ENCODE measurements at regions of chr1 and their contacts with region 1.

Region 1: GRCh38 chr1:204162231-204163074 is 3.7 kb downstream of the REN start:
- DNase-seq: peak; percentile 70 to 89 (median 74)
- ATAC-seq: peak; percentile 67 to 90 (median 86)
- H3K4me3 ChIP-seq: no peak overlapping the region
- H3K27ac ChIP-seq: no peak overlapping the region
- H3K4me1 ChIP-seq: no peaks in the 10 kb centered on the region
- H3K27me3 ChIP-seq: peaks cover 0 to 8% (median 0%) of the 10 kb centered on the region in 9 donors
- CTCF ChIP-seq: peak; percentile 92 to 100 (median 99)
- POLR2A ChIP-seq: no peak

Region 2: GRCh38 chr1:204128964-204129896 is 33.2 kb before region 1 on chr1:
- intact Hi-C with region 1: no loop called
- DNase-seq: peak; percentile 70 to 87 (median 77)
- ATAC-seq: peak; percentile 62 to 89 (median 84)
- H3K4me3 ChIP-seq: peak overlapping the region in 5 of 12 donors; percentile 3 to 25 (median 18)
- H3K27ac ChIP-seq: peak overlapping the region in 3 of 12 donors; percentile 25 to 80 (median 38)
- H3K4me1 ChIP-seq: peaks cover 4 to 48% (median 23%) of the 10 kb centered on the region in 12 donors
- H3K27me3 ChIP-seq: no peaks in the 10 kb centered on the region
- CTCF ChIP-seq: peak; percentile 86 to 95 (median 92)
- POLR2A ChIP-seq: no peak

Region 3: GRCh38 chr1:204207136-204207616 is 44.7 kb after region 1 on chr1:
- intact Hi-C with region 1: loop called (anchors 1 to 5 kb)
- DNase-seq: peak; percentile 48 to 86 (median 63)
- ATAC-seq: peak; percentile 78 to 91 (median 86)
- H3K4me3 ChIP-seq: no peak overlapping the region
- H3K27ac ChIP-seq: no peak overlapping the region
- H3K4me1 ChIP-seq: peaks cover 0 to 4% (median 0%) of the 10 kb centered on the region in 12 donors
- H3K27me3 ChIP-seq: peaks cover 0 to 28% (median 0%) of the 10 kb centered on the region in 9 donors
- CTCF ChIP-seq: peak; percentile 77 to 96 (median 89)
- POLR2A ChIP-seq: no peak

Region 4: GRCh38 chr1:204398217-204399081 is 236.0 kb after region 1 on chr1:
- intact Hi-C with region 1: loop called in 4 of 10 experiments (anchors 1 to 10 kb)
- DNase-seq: peak in 3 of 5 donors; percentile 35 to 46 (median 39)
- ATAC-seq: peak; percentile 52 to 80 (median 78)
- H3K4me3 ChIP-seq: no peak overlapping the region
- H3K27ac ChIP-seq: peak overlapping the region in 2 of 12 donors; percentile 30 to 40
- H3K4me1 ChIP-seq: no peaks in the 10 kb centered on the region
- H3K27me3 ChIP-seq: no peaks in the 10 kb centered on the region
- CTCF ChIP-seq: peak; percentile 69 to 86 (median 79)
- POLR2A ChIP-seq: no peak

Region 5: GRCh38 chr1:204506961-204507387 is 344.5 kb after region 1 on chr1:
- intact Hi-C with region 1: loop called in 2 of 10 experiments (anchors 10 kb)
- DNase-seq: peak in 4 of 5 donors; percentile 72 to 83 (median 78)
- ATAC-seq: peak; percentile 77 to 89 (median 82)
- H3K4me3 ChIP-seq: peak overlapping the region; percentile 5 to 76 (median 60)
- H3K27ac ChIP-seq: peak overlapping the region; percentile 70 to 89 (median 84)
- H3K4me1 ChIP-seq: peaks cover 0 to 34% (median 7%) of the 10 kb centered on the region in 12 donors
- H3K27me3 ChIP-seq: no peaks in the 10 kb centered on the region
- CTCF ChIP-seq: no peak
- POLR2A ChIP-seq: peak in 1 of 2 donors; percentile 7